Kidney (tissue), 22 donors: ENCODE measurements at regions of chr16 and their contacts with region 1.

Region 1: DNA sequence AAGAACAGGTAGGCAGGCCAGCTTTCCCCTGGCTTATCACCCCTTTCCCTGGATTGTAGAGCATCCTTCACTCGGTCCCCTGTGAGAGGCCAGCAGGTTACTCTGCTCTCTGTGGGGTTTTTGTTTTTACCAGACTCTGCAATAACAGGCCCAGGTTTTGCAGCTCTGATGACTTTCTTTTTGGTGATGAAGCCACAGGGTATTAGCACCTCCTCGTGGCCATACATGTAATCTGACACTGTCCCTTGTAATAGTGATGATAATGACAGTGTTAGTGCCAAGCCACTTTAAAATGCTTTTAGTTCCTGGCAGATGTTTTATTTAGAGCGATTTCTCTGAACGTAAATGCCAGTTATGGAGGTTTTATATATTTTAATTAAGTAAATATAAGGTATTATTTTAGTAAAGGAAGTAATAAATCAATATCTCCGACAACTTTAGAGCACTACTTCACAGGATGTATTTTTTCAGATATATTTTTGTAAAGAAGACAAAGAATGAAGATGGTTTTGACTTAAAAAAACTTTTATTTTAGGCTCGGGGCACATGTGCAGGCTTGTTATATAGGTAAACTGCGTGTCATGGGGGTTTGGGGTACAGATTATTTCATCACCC is 38.0 kb upstream of the CPHXL start:
- DNase-seq: peak in 4 of 5 donors; percentile 59 to 82 (median 74)
- H3K4me3 ChIP-seq: no peak overlapping the region
- H3K27ac ChIP-seq: no peak overlapping the region
- H3K4me1 ChIP-seq: no peaks in the 10 kb centered on the region
- H3K27me3 ChIP-seq: no peaks in the 10 kb centered on the region
- CTCF ChIP-seq: peak; percentile 82

Region 2: GRCh38 chr16:75471723-75472633 is 292.3 kb before region 1 on chr16:
- intact Hi-C with region 1: loop called (anchors 5 kb)
- DNase-seq: peak in 4 of 5 donors; percentile 54 to 80 (median 66)
- H3K4me3 ChIP-seq: no peak overlapping the region
- H3K27ac ChIP-seq: no peak overlapping the region
- H3K4me1 ChIP-seq: no peaks in the 10 kb centered on the region
- H3K27me3 ChIP-seq: no peaks in the 10 kb centered on the region
- CTCF ChIP-seq: peak; percentile 74

Region 3: GRCh38 chr16:75653922-75654321 is 110.3 kb before region 1 on chr16:
- intact Hi-C with region 1: loop called (anchors 10 kb)
- DNase-seq: no peak
- H3K4me3 ChIP-seq: no peak overlapping the region
- H3K27ac ChIP-seq: no peak overlapping the region
- H3K4me1 ChIP-seq: peaks cover 0 to 13% (median 3%) of the 10 kb centered on the region in 3 donors
- H3K27me3 ChIP-seq: no peaks in the 10 kb centered on the region
- CTCF ChIP-seq: no peak